Vagina (tissue), 2 donors: ENCODE measurements at regions of chr11 and their contacts with region 1.

Region 1: GRCh38 chr11:34357701-34358257 is at the start of gene ABTB2:
- DNase-seq: peak in 1 of 2 donors; percentile 98
- H3K4me3 ChIP-seq: peak within 1 kb of the TSS; percentile 61 to 70
- H3K27ac ChIP-seq: peak within 1 kb of the TSS; percentile 74
- H3K4me1 ChIP-seq: peaks cover 26% of the 10 kb centered on the region
- H3K27me3 ChIP-seq: no peaks in the 10 kb centered on the region
- CTCF ChIP-seq: no peak
- POLR2A ChIP-seq: peak; percentile 39 to 97
- total RNA-seq, gene ABTB2: 10.8 TPM

Region 2: GRCh38 chr11:33996498-33997454 is 361.0 kb before region 1 on chr11:
- intact Hi-C with region 1: loop called (anchors 2 kb)
- DNase-seq: no peak
- H3K4me3 ChIP-seq: no peak overlapping the region
- H3K27ac ChIP-seq: no peak overlapping the region
- H3K4me1 ChIP-seq: no peaks in the 10 kb centered on the region
- H3K27me3 ChIP-seq: no peaks in the 10 kb centered on the region
- CTCF ChIP-seq: peak; percentile 60 to 80 (median 67)
- POLR2A ChIP-seq: no peak

Region 3: GRCh38 chr11:34051349-34052035 is 306.3 kb before region 1 on chr11 and contains the start of gene CAPRIN1:
- intact Hi-C with region 1: loop called (anchors 5 kb)
- DNase-seq: peak in 1 of 2 donors; percentile 87
- H3K4me3 ChIP-seq: peak within 1 kb of the TSS; percentile 77 to 96
- H3K27ac ChIP-seq: peak within 1 kb of the TSS; percentile 95
- H3K4me1 ChIP-seq: peaks cover 41% of the 10 kb centered on the region
- H3K27me3 ChIP-seq: no peaks in the 10 kb centered on the region
- CTCF ChIP-seq: no peak
- POLR2A ChIP-seq: peak in 1 of 2 donors; percentile 71
- total RNA-seq, gene CAPRIN1: 123 TPM

Region 4: GRCh38 chr11:34174412-34175041 is 183.3 kb before region 1 on chr11:
- intact Hi-C with region 1: loop called (anchors 1 kb)
- DNase-seq: no peak
- H3K4me3 ChIP-seq: peak overlapping the region; percentile 15 to 27
- H3K27ac ChIP-seq: peak overlapping the region; percentile 54
- H3K4me1 ChIP-seq: peaks cover 28% of the 10 kb centered on the region
- H3K27me3 ChIP-seq: no peaks in the 10 kb centered on the region
- CTCF ChIP-seq: peak; percentile 90 to 97 (median 95)
- POLR2A ChIP-seq: no peak

Region 5: DNA sequence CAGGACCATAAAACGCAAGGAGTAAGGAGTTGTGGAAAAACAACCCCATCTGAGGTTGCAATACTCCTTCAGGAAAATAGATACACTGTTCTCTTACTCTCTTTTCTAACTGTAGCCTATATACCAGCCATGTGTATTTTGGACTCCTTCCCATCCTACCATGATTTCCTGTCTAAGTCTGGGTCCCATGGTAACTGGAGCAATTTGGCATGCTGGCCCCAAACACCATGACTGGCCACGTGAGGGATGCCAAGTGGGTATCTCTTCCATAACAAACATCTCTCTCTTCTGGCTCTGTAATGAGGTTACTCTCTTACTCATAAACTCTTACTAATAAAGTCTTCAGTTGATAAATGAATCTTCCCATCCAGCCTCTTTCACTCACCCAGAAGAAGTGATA is 26.4 kb before region 1 on chr11:
- intact Hi-C with region 1: loop called (anchors 2 kb)
- DNase-seq: no peak
- H3K4me3 ChIP-seq: no peak overlapping the region
- H3K27ac ChIP-seq: no peak overlapping the region
- H3K4me1 ChIP-seq: peaks cover 34% of the 10 kb centered on the region
- H3K27me3 ChIP-seq: no peaks in the 10 kb centered on the region
- CTCF ChIP-seq: no peak
- POLR2A ChIP-seq: no peak

Region 6: DNA sequence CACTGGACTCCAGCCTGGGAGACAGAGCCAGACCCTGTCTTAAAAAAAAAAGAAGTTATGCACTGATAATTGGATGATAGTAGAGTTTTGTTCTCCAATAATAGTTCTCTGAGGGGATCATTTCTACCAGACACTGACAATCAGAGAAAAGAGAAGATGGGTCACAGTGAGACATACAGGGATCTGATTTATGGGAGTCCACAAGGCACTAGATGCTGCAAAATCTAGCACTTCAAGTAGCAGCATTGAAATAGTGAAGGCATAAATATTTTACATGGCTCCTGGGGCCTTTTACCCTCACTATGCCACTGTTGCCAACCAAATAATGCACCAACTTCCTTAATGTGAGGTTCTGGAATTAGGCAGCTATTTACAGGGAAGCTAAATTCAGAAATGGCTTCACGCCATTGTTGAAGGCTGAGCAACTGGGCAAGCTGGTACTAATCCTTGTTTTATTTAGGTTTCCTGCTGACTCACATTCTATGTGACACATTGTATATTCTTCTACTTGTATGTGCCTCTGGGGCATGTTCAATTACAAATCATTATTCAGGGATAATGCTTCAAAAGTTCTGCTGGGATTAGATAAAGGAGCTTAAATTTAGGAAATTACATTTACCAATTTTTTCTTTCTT is 38.3 kb after region 1 on chr11:
- intact Hi-C with region 1: no loop called
- DNase-seq: no peak
- H3K4me3 ChIP-seq: no peak overlapping the region
- H3K27ac ChIP-seq: no peak overlapping the region
- H3K4me1 ChIP-seq: no peaks in the 10 kb centered on the region
- H3K27me3 ChIP-seq: no peaks in the 10 kb centered on the region
- CTCF ChIP-seq: no peak
- POLR2A ChIP-seq: no peak